K562 (cell line): ENCODE measurements at regions of chr12 and their contacts with region 1.

Region 1: GRCh38 chr12:96399919-96400797 is at the start of gene CDK17:
- DNase-seq: peak; percentile 89 to 94 (median 93)
- ATAC-seq: peak; percentile 67
- H3K4me3 ChIP-seq: peak within 1 kb of the TSS; percentile 90
- H3K27ac ChIP-seq: peak within 1 kb of the TSS; percentile 96
- H3K4me1 ChIP-seq: peaks cover 10% of the 10 kb centered on the region in 2 experiments; a peak in 3 of 5 replicates
- H3K27me3 ChIP-seq: no peaks in the 10 kb centered on the region
- CTCF ChIP-seq: peak; percentile 25 to 75 (median 58); a peak in 4 of 6 replicates
- EP300 ChIP-seq: no peak
- POLR2A ChIP-seq: peak; percentile 76
- RAD21 ChIP-seq: peak; percentile 50 to 51
- polyA plus RNA-seq, gene CDK17: 4.8 to 5.4 TPM

Region 2: GRCh38 chr12:96061864-96062453 is 338.2 kb before region 1 on chr12:
- CTCF ChIA-PET with region 1: no interaction called
- POLR2A ChIA-PET with region 1: no interaction called
- in situ Hi-C with region 1: no loop called
- intact Hi-C with region 1: loop called (anchors 5 kb)
- DNase-seq: peak; percentile 57 to 78 (median 60)
- ATAC-seq: peak; percentile 96
- H3K4me3 ChIP-seq: no peak overlapping the region
- H3K27ac ChIP-seq: no peak overlapping the region
- H3K4me1 ChIP-seq: no peaks in the 10 kb centered on the region
- H3K27me3 ChIP-seq: peaks cover 0 to 11% of the 10 kb centered on the region in 2 experiments; a peak in 3 of 5 replicates
- CTCF ChIP-seq: peak; percentile 72 to 84 (median 76)
- EP300 ChIP-seq: no peak
- POLR2A ChIP-seq: no peak
- RAD21 ChIP-seq: peak; percentile 91 to 96

Region 3: DNA sequence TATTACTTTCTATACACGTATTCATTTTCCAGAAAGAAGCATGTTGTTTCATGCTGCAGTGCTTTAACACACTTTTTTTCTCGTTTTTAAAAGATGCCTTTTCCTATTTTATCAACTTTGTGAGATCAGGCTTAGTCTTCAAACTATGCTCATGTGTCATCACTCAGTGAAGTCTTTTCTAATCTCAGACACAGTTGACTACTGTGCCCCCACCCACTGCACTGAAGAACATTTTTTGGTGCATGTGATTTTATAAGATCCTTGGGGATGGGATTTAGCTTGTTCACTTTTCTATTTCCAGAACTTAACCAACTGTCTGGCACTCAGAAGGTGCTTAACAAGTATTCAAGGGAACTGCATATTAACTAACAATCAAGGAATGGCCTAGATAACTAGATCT is 85.4 kb before region 1 on chr12:
- CTCF ChIA-PET with region 1: no interaction called
- POLR2A ChIA-PET with region 1: no interaction called
- in situ Hi-C with region 1: no loop called
- intact Hi-C with region 1: loop called (anchors 5 kb)
- DNase-seq: peak in 1 of 4 experiments; percentile 30
- ATAC-seq: peak; percentile 81
- H3K4me3 ChIP-seq: no peak overlapping the region
- H3K27ac ChIP-seq: no peak overlapping the region
- H3K4me1 ChIP-seq: peaks cover 0 to 9% of the 10 kb centered on the region in 2 experiments; a peak in 4 of 5 replicates
- H3K27me3 ChIP-seq: no peaks in the 10 kb centered on the region
- CTCF ChIP-seq: no peak
- EP300 ChIP-seq: no peak
- POLR2A ChIP-seq: no peak
- RAD21 ChIP-seq: no peak

Region 4: DNA sequence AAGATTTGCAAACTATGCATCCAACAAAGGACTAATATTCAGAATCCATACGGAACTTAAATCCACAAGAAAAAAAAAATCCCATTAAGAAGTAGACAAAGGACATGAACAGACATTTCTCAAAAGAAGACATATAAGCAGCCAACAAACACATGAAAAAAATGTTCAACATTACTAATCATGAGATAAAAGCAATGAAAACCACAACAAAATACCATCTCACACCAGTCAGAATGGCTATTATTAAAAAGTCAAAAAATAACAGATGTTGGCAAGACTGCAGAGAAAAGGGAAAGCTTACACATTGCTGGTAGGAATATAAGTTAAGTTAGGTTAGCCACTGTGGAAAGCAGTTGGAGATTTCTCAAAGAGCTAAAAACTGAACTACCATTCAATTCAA is 16.2 kb before region 1 on chr12:
- CTCF ChIA-PET with region 1: no interaction called
- POLR2A ChIA-PET with region 1: interaction called, 11 read pairs
- in situ Hi-C with region 1: no loop called
- intact Hi-C with region 1: no loop called
- DNase-seq: no peak
- ATAC-seq: no peak
- H3K4me3 ChIP-seq: no peak overlapping the region
- H3K27ac ChIP-seq: no peak overlapping the region
- H3K4me1 ChIP-seq: peaks cover 3 to 10% of the 10 kb centered on the region in 2 experiments; a peak in 3 of 5 replicates
- H3K27me3 ChIP-seq: no peaks in the 10 kb centered on the region
- CTCF ChIP-seq: no peak
- EP300 ChIP-seq: no peak
- POLR2A ChIP-seq: no peak
- RAD21 ChIP-seq: no peak

Region 5: GRCh38 chr12:96471368-96472050 is 71.4 kb after region 1 on chr12:
- CTCF ChIA-PET with region 1: no interaction called
- POLR2A ChIA-PET with region 1: no interaction called
- in situ Hi-C with region 1: no loop called
- intact Hi-C with region 1: no loop called
- DNase-seq: no peak
- ATAC-seq: no peak
- H3K4me3 ChIP-seq: no peak overlapping the region
- H3K27ac ChIP-seq: no peak overlapping the region
- H3K4me1 ChIP-seq: no peaks in the 10 kb centered on the region; a peak in 2 of 5 replicates
- H3K27me3 ChIP-seq: no peaks in the 10 kb centered on the region
- CTCF ChIP-seq: no peak
- EP300 ChIP-seq: no peak
- POLR2A ChIP-seq: no peak
- RAD21 ChIP-seq: no peak

Region 6: DNA sequence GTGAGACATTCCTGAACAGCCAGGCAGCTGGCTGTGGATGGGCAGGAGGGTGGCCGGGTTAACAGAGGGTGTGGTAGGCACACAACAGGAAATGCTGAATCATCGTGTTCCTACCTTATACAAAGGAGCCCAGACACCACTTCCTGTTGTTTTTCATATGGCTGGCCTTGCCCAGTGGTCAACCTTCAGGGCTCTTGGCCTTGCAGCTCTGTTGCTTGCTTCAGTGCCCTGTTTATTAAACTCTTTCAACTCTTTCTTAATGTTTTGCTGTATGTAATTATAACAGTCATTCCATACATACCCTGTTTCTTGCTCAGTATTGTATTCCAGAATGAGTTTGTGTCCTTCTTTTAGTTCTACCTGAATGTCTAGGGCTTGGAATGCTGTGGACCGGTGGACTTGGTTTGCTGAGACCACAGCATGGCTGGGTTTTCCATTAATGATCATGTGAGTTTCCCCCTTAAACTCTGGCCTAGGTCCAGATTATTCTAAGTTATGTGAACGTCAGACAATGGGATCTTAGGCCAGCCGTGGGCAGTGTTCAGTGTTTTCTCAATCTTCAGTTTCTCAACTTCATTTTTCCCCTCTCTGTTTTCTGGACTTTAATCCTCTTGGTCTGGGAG is 101.1 kb after region 1 on chr12:
- CTCF ChIA-PET with region 1: no interaction called
- POLR2A ChIA-PET with region 1: interaction called, 3 read pairs
- in situ Hi-C with region 1: no loop called
- intact Hi-C with region 1: loop called (anchors 5 kb)
- DNase-seq: peak in 3 of 4 experiments; percentile 11 to 53 (median 47)
- ATAC-seq: peak; percentile 76
- H3K4me3 ChIP-seq: no peak overlapping the region
- H3K27ac ChIP-seq: peak overlapping the region; percentile 60
- H3K4me1 ChIP-seq: peaks cover 5 to 21% of the 10 kb centered on the region in 2 experiments; a peak in 4 of 5 replicates
- H3K27me3 ChIP-seq: no peaks in the 10 kb centered on the region
- CTCF ChIP-seq: no peak
- EP300 ChIP-seq: 0 out of 2 replicates have a peak, but pooled peaks have one; percentile 7
- POLR2A ChIP-seq: no peak
- RAD21 ChIP-seq: no peak